Heart right ventricle (tissue), 16 donors: ENCODE measurements at regions of chr15 and their contacts with region 1.

Region 1: GRCh38 chr15:43270676-43271306 is 4.1 kb upstream of the TGM5 start:
- DNase-seq: no peak
- ATAC-seq: peak in 1 of 8 donors; percentile 20
- H3K4me3 ChIP-seq: no peak overlapping the region
- H3K27ac ChIP-seq: peak overlapping the region in 2 of 10 donors; percentile 15 to 62
- H3K4me1 ChIP-seq: peaks cover 0 to 7% (median 0%) of the 10 kb centered on the region in 9 donors
- H3K27me3 ChIP-seq: peaks cover 0 to 21% (median 4%) of the 10 kb centered on the region in 7 donors
- CTCF ChIP-seq: no peak

Region 2: GRCh38 chr15:43230640-43231115 is 40.1 kb before region 1 on chr15:
- intact Hi-C with region 1: loop called in 2 of 10 experiments (anchors 5 kb)
- DNase-seq: no peak
- ATAC-seq: peak in 1 of 8 donors; percentile 34
- H3K4me3 ChIP-seq: no peak overlapping the region
- H3K27ac ChIP-seq: no peak overlapping the region
- H3K4me1 ChIP-seq: peaks cover 0 to 7% (median 0%) of the 10 kb centered on the region in 9 donors
- H3K27me3 ChIP-seq: no peaks in the 10 kb centered on the region
- CTCF ChIP-seq: no peak

Region 3: GRCh38 chr15:43285609-43286037 is 14.8 kb after region 1 on chr15:
- intact Hi-C with region 1: no loop called
- DNase-seq: peak in 1 of 2 donors; percentile 40
- ATAC-seq: peak; percentile 46 to 83 (median 58)
- H3K4me3 ChIP-seq: no peak overlapping the region
- H3K27ac ChIP-seq: no peak overlapping the region
- H3K4me1 ChIP-seq: peaks cover 0 to 4% (median 0%) of the 10 kb centered on the region in 9 donors
- H3K27me3 ChIP-seq: peaks cover 0 to 12% (median 0%) of the 10 kb centered on the region in 7 donors
- CTCF ChIP-seq: peak; percentile 58 to 86 (median 78)